ENCODE measurements at regions of chr15 and their contacts with region 1.

Region 1: DNA sequence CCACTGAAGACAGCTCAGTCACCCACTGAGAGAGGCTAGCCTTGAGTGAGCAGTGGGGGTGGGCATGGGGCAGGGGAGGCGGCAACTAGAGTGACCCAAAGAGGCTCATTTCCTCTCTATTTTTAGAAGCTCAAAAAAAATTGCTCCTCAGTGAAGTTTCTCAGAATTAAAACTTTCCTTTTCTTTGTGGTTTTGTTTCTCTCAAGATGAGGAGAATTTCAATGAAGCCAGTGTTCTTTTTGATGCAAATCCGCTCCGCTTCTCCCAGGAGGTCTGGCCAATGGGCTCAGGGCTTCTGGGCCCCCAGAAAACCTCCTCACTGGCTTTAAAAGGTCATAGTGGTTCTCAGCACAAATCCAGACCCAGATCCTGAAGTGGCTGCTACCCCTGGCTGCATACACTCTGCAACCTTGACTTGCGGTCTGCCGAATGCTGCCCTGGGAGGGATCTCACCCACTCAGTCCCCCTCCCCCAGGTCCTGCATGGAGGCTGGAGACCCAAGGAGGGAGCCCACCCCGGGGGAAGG is at the start of gene ACSBG1:
- DNase-seq: peak; percentile 24

Region 2: DNA sequence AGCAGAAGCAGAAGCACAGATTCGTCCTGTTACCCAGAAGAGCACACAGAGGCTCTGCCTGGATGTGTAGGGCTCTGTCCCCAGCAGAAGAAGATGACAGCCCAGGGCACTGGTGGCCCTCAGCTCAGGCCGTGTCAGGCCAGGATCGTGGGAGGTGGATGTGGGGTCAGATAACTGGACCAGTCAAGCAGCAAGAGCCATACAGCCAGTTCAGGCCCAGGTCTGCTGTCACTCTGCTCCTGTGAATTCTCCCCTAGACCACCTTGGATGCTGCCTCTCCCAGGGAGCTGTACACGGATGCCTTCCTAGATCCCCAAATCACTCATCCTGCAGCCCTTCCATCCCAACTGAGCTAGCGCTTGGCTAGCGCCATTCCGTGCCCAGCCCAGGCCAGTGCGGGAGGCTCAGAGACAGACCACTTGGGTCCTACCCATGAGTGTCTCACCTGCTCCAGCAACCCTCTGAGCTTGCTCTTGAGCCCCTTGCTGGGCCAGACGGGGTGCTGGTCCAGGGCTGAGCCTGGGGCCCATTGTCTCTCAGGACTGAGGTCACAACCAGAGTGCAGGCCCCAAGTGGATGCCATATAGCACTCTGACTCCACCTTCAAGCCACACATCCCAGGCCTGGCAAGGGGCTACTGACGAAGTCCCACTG is 124.6 kb before region 1 on chr15:
- in situ Hi-C with region 1: loop called (anchors 10 kb)
- DNase-seq: no peak

Region 3: DNA sequence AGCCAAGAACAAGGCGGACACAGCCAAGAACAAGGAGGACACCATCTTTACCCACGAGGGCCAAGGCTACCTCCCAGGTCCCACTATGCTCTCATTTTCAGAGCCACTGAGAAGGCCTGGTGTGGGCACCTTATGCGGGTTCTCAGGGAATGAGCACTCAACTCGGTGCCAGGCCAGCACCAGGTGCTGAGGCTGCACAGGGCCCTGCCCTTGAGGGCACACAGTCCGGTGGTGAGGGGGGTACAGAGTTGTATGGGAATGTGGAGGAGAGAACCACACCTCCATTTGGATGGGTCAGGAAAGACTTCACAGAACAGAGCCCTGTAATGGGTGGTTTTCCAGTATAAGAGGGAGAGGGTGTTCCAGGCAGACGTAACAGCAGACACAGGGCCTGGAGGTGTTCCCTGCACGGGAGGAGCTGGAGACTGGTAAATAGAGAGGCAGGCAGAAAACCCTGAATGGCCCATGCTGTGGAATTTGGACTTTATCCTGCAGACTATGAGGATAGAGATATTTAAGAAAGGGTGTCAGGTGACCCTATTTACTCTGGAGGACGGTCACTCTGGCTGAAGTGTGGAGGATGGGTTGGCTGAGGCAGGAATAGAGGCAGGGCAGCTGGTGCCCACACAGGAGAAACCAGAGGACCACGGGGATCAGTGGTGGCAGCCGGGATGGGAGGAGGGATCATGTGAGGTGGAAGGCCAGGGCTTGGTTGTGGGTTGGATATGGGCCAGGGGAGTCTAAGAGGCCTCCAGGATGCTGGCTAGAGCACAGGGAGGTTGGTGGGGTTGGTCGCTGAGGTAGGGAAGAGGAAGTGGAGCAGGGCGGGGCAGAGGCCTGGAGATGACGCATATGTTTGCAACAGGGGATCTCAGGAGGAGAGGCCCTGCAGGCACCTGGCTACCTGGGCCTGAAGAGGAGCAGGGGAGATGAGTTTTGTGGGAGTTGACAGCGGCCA is 140.1 kb after region 1 on chr15:
- in situ Hi-C with region 1: no loop called
- DNase-seq: peak; percentile 75

Region 4: DNA sequence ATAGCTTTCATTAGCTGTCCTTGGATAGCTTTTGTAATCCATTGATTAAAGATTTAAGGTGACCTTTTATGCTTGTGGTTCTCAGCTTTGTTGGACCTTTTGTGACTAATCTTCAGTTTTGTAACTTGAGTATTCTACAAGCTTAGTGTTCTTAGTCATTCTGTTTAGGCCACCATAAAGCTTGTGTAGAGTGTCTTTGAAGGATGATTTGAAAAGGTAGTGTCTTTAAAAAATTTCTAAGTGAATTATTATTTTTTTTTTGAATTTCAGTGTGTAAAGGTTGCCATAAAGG is 645.6 kb after region 1 on chr15:
- in situ Hi-C with region 1: no loop called
- DNase-seq: no peak

Region 5: GRCh38 chr15:79673416-79674123 is 1439.0 kb after region 1 on chr15:
- in situ Hi-C with region 1: no loop called
- DNase-seq: peak; percentile 57

Measured in KBM-7 (cell line).